ENCODE measurements at regions of chr12 and their contacts with region 1.

Region 1: GRCh38 chr12:56224102-56224701 is at the start of gene NABP2:
- DNase-seq: peak; percentile 99
- H3K4me3 ChIP-seq: peak within 1 kb of the TSS; percentile 70
- H3K27ac ChIP-seq: peak within 1 kb of the TSS; percentile 92
- H3K4me1 ChIP-seq: peaks cover 20% of the 10 kb centered on the region
- H3K27me3 ChIP-seq: no peaks in the 10 kb centered on the region
- CTCF ChIP-seq: peak; percentile 88
- total RNA-seq, gene NABP2: 30.3 to 68.4 TPM

Region 2: GRCh38 chr12:56258057-56258819 is 34.0 kb after region 1 on chr12 and contains the start of gene ANKRD52:
- intact Hi-C with region 1: loop called (anchors 5 kb)
- DNase-seq: peak; percentile 74
- H3K4me3 ChIP-seq: peak within 1 kb of the TSS; percentile 96
- H3K27ac ChIP-seq: peak within 1 kb of the TSS; percentile 67
- H3K4me1 ChIP-seq: peaks cover 5% of the 10 kb centered on the region
- H3K27me3 ChIP-seq: no peaks in the 10 kb centered on the region
- CTCF ChIP-seq: peak; percentile 64
- total RNA-seq, gene ANKRD52: 39.3 to 57.7 TPM

Region 3: GRCh38 chr12:56346703-56347102 is 122.5 kb after region 1 on chr12:
- intact Hi-C with region 1: no loop called
- DNase-seq: no peak
- H3K4me3 ChIP-seq: no peak overlapping the region
- H3K27ac ChIP-seq: no peak overlapping the region
- H3K4me1 ChIP-seq: no peaks in the 10 kb centered on the region
- H3K27me3 ChIP-seq: no peaks in the 10 kb centered on the region
- CTCF ChIP-seq: no peak

Region 4: DNA sequence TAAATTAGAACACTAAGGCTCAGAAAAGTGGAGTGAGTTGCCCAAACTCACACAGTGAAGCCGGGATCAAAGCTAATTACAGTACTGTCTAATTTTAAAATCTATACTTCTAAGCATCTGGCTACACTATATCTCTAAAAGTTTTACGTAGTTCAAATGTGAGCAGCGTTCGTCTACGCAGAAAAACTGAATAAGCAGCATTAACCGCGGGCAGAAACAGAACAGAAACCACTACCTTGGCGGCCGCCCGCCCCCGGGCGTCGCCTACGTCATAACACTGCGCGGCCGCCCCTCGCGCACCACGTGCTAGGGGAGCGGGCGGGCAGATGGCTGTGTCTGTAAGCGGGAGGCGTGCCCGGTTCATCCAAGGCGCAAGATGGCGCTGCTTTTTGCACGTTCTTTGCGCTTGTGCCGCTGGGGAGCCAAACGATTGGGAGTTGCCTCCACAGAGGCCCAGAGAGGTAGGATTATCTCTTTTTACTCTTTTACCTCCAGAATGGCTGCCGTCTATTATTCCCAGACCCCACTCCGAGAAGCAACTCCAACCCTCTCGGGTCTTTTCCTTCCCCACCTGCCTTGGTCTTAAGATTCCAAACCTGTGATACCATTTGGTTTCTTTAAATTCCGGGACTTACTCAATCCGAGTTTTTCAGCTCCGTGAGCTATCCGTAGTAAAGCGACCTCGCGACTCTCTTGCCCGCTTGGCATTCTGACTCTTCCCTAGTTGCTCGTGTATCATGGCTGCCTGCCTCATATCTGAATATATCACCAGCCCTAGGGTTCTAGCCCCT is 244.2 kb after region 1 on chr12 and contains the start of gene SPRYD4:
- intact Hi-C with region 1: no loop called
- DNase-seq: peak; percentile 94
- H3K4me3 ChIP-seq: peak within 1 kb of the TSS; percentile 90
- H3K27ac ChIP-seq: peak within 1 kb of the TSS; percentile 87
- H3K4me1 ChIP-seq: peaks cover 5% of the 10 kb centered on the region
- H3K27me3 ChIP-seq: no peaks in the 10 kb centered on the region
- CTCF ChIP-seq: peak; percentile 25
- total RNA-seq, gene SPRYD4: 4.0 to 4.2 TPM

Measured in colonic mucosa (tissue), 4 donors.